ENCODE measurements at regions of chrX and their contacts with region 1.

Region 1: DNA sequence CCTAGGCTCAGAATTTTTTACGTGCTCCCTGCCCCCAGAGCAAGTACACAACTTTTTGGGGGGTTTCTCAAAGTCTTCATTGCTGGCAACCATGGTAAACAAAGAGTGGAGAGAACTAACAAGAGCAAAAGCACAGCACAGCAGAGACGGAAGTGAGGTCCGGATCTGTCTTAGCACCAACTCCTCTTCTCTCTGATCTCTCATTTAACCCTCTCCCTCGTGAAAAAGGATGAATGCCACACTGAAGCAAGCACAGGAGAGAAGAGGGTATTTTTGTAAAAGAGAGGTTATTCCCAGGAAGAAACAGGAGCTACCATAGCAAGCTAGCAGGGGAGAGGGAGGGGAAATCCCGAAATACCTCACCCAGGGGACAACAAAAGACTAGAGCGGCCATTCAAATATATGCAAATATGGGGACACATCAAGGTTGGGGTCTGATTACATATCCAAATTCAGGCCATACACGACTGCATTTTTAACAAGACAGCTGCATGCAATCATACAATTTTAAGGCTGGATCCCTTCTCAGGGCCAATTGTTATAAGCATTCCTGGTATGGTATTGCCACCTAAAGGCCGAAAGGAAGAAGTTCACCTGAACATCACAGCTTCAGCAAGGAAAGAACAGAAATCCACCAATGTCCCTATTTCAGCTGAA is 46.6 kb downstream of the CD40LG start:
- DNase-seq: peak; percentile 58
- H3K4me3 ChIP-seq: peak overlapping the region; percentile 31
- H3K27ac ChIP-seq: peak overlapping the region; percentile 40
- H3K4me1 ChIP-seq: peaks cover 18% of the 10 kb centered on the region
- CTCF ChIP-seq: peak; percentile 78

Region 2: DNA sequence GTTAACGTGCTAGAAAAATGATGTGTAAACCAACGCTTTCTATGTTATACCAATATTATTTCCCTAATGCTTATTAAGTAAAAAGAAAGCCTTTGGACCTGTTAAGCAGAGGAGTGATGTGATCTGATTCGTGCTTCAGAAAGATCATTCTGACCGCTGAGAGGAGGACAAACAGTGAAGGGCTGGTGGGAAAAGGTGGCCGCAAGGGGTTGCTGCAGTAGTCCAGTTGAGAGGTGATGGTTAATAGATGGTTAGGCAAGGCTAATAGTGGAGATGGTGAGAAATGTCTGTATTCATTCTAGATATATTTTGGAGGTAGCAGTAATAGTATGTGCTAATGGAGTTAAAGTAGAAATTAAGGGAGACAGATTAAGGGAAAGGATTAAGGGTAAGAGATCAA is 175.5 kb before region 1 on chrX:
- CTCF ChIA-PET with region 1: no interaction called
- POLR2A ChIA-PET with region 1: no interaction called
- intact Hi-C with region 1: loop called (anchors 10 kb)
- DNase-seq: no peak
- H3K4me3 ChIP-seq: no peak overlapping the region
- H3K27ac ChIP-seq: no peak overlapping the region
- H3K4me1 ChIP-seq: no peaks in the 10 kb centered on the region
- CTCF ChIP-seq: no peak

Region 3: GRCh38 chrX:136531951-136532350 is 162.6 kb before region 1 on chrX and contains the start of gene VGLL1:
- CTCF ChIA-PET with region 1: no interaction called
- POLR2A ChIA-PET with region 1: no interaction called
- intact Hi-C with region 1: no loop called
- DNase-seq: no peak
- H3K4me3 ChIP-seq: no peak within 1 kb of the TSS
- H3K27ac ChIP-seq: no peak within 1 kb of the TSS
- H3K4me1 ChIP-seq: no peaks in the 10 kb centered on the region
- CTCF ChIP-seq: no peak
- total RNA-seq, gene VGLL1: not detected in 2 replicates

Region 4: GRCh38 chrX:136608295-136609171 is 86.0 kb before region 1 on chrX:
- CTCF ChIA-PET with region 1: no interaction called
- POLR2A ChIA-PET with region 1: no interaction called
- intact Hi-C with region 1: loop called (anchors 2 kb)
- DNase-seq: peak; percentile 21
- H3K4me3 ChIP-seq: no peak overlapping the region
- H3K27ac ChIP-seq: no peak overlapping the region
- H3K4me1 ChIP-seq: no peaks in the 10 kb centered on the region
- CTCF ChIP-seq: peak; percentile 60

Region 5: GRCh38 chrX:136652822-136653723 is 41.5 kb before region 1 on chrX:
- CTCF ChIA-PET with region 1: no interaction called
- POLR2A ChIA-PET with region 1: no interaction called
- intact Hi-C with region 1: no loop called
- DNase-seq: no peak
- H3K4me3 ChIP-seq: no peak overlapping the region
- H3K27ac ChIP-seq: no peak overlapping the region
- H3K4me1 ChIP-seq: peaks cover 4% of the 10 kb centered on the region
- CTCF ChIP-seq: no peak

Region 6: GRCh38 chrX:136725446-136726104 is 31.0 kb after region 1 on chrX:
- CTCF ChIA-PET with region 1: no interaction called
- POLR2A ChIA-PET with region 1: no interaction called
- intact Hi-C with region 1: no loop called
- DNase-seq: no peak
- H3K4me3 ChIP-seq: no peak overlapping the region
- H3K27ac ChIP-seq: no peak overlapping the region
- H3K4me1 ChIP-seq: peaks cover 6% of the 10 kb centered on the region
- CTCF ChIP-seq: no peak

Region 7: GRCh38 chrX:136839196-136839595 is 144.6 kb after region 1 on chrX:
- CTCF ChIA-PET with region 1: no interaction called
- POLR2A ChIA-PET with region 1: no interaction called
- intact Hi-C with region 1: no loop called
- DNase-seq: no peak
- H3K4me3 ChIP-seq: no peak overlapping the region
- H3K27ac ChIP-seq: no peak overlapping the region
- H3K4me1 ChIP-seq: no peaks in the 10 kb centered on the region
- CTCF ChIP-seq: no peak

Measured in OCI-LY7 (cell line).